ENCODE measurements at regions of chr10 and their contacts with region 1.

Region 1: DNA sequence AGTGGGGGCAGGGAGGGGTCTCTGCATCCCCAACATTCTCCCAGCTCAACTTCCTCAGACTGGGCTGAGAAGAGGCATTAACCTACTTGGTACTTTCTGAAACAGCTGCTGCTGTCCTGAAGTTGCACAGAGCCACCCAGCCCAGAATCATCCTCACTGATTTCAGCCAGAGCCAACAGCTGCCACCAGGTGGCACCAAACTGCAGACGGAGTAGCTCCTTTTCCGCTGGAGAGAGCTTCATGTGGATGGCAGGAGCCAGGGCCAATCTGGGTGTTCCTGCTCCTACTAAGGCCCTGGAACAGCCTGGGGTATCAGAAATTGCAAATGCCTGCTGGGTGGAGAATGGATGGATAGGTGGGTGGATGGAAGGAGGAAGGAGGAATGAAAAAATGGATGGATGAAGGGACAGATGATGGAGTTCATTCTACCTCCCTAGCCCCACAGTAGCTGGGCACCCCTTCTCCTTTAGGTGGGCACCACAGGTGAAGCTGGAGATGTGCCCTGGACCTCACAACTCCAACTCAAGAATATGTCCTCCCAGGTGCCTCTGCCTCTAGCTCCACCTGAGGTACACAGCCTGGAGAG is 11.8 kb upstream of the DRGX start:
- DNase-seq: peak; percentile 52
- ATAC-seq: peak; percentile 94
- H3K4me3 ChIP-seq: no peak overlapping the region
- H3K27ac ChIP-seq: no peak overlapping the region
- H3K4me1 ChIP-seq: no peaks in the 10 kb centered on the region
- H3K27me3 ChIP-seq: peaks cover 3 to 22% of the 10 kb centered on the region in 2 experiments; a peak in 4 of 5 replicates
- CTCF ChIP-seq: peak; percentile 92
- EP300 ChIP-seq: no peak
- POLR2A ChIP-seq: no peak
- RAD21 ChIP-seq: peak; percentile 63; the same call in 1 of the 2 replicates

Region 2: DNA sequence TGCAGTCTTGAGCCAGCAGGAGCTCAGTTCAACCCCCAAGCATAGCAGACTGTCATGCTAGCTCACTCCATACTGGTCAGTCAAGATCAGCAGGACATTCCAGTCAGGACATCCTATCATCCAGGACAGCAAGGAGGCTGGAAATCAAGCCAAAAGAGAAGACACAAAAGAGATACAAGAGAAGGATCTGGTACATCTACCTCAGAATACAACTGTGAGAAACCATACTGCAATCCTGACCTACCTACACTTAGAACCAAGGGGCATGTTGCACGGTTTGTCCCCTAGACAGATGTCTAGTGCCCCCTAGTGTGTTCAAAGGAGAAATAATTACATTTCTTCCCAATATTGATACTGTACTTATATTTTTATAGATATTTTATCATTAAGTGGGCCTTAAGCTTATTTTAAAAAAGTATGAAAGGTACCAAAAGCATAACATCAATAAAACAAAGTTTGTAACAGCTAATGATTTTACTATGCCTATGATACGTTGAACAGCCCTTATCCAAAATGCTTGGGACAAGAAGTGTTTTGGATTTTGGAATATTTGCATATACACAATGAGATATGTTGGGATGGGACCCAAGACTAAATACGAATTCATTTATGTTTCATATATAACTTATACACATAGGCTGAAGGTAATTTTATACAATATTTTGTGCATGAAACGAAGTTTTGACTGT is 104.6 kb after region 1 on chr10:
- CTCF ChIA-PET with region 1: interaction called, 14 read pairs
- POLR2A ChIA-PET with region 1: no interaction called
- in situ Hi-C with region 1: loop called (anchors 5 kb)
- intact Hi-C with region 1: loop called (anchors 1 kb)
- DNase-seq: peak; percentile 16
- ATAC-seq: peak; percentile 87
- H3K4me3 ChIP-seq: no peak overlapping the region
- H3K27ac ChIP-seq: no peak overlapping the region
- H3K4me1 ChIP-seq: no peaks in the 10 kb centered on the region
- H3K27me3 ChIP-seq: no peaks in the 10 kb centered on the region; a peak in 1 of 5 replicates
- CTCF ChIP-seq: peak; percentile 72
- EP300 ChIP-seq: no peak
- POLR2A ChIP-seq: no peak
- RAD21 ChIP-seq: peak; percentile 54; the same call in 1 of the 2 replicates

Region 3: GRCh38 chr10:49518982-49519578 is 111.4 kb after region 1 on chr10:
- CTCF ChIA-PET with region 1: interaction called, 16 read pairs
- POLR2A ChIA-PET with region 1: no interaction called
- in situ Hi-C with region 1: loop called (anchors 5 kb)
- intact Hi-C with region 1: no loop called
- DNase-seq: peak; percentile 36
- ATAC-seq: peak; percentile 82
- H3K4me3 ChIP-seq: no peak overlapping the region
- H3K27ac ChIP-seq: no peak overlapping the region
- H3K4me1 ChIP-seq: peaks cover 12% of the 10 kb centered on the region
- H3K27me3 ChIP-seq: no peaks in the 10 kb centered on the region
- CTCF ChIP-seq: peak; percentile 73
- EP300 ChIP-seq: no peak
- POLR2A ChIP-seq: no peak
- RAD21 ChIP-seq: no peak; the same call in 1 of the 2 replicates

Measured in HepG2 (cell line).